B cell (primary cell): ENCODE measurements at regions of chr12 and their contacts with region 1.

Region 1: DNA sequence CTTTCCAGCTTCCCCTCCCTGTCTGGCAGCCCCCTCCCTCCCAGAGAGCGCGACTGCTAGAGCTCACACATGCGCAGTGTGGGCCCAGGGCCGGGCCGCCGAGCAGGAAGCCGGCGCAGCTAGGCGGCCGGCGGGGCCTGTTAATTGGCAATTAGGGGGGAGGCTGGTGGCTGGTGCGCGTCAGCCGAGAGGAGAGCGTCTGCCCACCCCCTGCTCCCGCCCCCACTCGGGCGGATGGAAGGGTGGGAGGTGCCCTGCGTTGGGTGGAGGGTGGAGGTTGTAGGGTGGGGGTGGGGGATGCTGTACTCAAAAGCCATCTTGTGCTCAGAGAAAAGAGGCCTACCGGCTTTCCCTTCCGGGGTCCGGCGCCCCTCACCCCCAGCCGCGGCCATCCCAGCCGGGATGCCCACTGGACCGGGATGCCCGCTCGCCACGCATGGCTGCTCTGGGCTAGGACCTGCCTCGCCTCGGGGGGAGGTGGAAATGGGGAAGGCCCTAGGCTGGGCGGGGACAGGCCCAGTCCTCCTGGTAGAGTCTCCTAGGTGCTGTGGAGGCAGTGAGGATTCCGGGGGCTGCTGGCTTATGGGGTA is 9.2 kb downstream of the HOXC8 start:
- DNase-seq: peak; percentile 84
- ATAC-seq: peak; percentile 87
- H3K4me3 ChIP-seq: peak overlapping the region in 4 of 5 experiments; percentile 43 to 71 (median 48)
- H3K4me3 Mint-ChIP-seq: peak overlapping the region; percentile 90
- H3K27ac ChIP-seq: peak overlapping the region; percentile 30 to 40
- H3K27ac Mint-ChIP-seq: peak overlapping the region; percentile 83
- H3K4me1 ChIP-seq: peaks cover 25 to 42% of the 10 kb centered on the region in 2 donors
- H3K4me1 Mint-ChIP-seq: peaks cover 22% of the 10 kb centered on the region
- H3K27me3 ChIP-seq: peaks cover 0 to 93% (median 73%) of the 10 kb centered on the region in 4 experiments
- H3K27me3 Mint-ChIP-seq: peaks cover 63% of the 10 kb centered on the region
- CTCF ChIP-seq: no peak

Region 2: DNA sequence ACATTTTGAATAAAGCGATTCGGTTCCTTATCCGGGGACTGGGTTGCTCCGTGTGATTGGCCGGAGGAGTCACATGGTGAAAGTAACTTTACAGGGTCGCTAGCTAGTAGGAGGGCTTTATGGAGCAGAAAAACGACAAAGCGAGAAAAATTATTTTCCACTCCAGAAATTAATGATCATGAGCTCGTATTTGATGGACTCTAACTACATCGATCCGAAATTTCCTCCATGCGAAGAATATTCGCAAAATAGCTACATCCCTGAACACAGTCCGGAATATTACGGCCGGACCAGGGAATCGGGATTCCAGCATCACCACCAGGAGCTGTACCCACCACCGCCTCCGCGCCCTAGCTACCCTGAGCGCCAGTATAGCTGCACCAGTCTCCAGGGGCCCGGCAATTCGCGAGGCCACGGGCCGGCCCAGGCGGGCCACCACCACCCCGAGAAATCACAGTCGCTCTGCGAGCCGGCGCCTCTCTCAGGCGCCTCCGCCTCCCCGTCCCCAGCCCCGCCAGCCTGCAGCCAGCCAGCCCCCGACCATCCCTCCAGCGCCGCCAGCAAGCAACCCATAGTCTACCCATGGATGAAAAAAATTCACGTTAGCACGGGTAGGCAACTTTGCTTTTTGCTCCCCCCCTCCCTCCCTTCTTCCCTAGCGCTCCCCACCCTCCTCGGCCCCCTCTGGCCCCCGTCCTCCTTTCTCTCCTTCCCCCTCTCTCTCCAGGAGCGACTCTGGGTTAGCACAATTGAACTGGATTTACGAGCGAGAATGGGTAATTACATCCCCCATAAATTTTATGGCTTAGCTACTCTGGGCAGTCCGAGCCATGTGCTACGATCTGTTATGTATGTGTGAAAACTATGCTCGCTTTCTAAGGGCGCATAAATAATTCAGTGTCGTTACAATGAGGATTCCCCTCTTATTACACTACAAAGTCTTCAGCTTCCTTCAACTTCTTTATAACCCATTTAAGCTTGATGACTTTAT is 36.1 kb after region 1 on chr12 and contains the start of gene HOXC4:
- CTCF ChIA-PET with region 1: no interaction called
- POLR2A ChIA-PET with region 1: interaction called, 3 read pairs
- intact Hi-C with region 1: loop called (anchors 1 kb)
- DNase-seq: peak; percentile 36
- ATAC-seq: peak; percentile 66
- H3K4me3 ChIP-seq: peak within 1 kb of the TSS in 4 of 5 experiments; percentile 69 to 78 (median 75)
- H3K4me3 Mint-ChIP-seq: peak within 1 kb of the TSS; percentile 91
- H3K27ac ChIP-seq: peak within 1 kb of the TSS; percentile 83 to 88
- H3K27ac Mint-ChIP-seq: peak within 1 kb of the TSS; percentile 95
- H3K4me1 ChIP-seq: peaks cover 36 to 42% of the 10 kb centered on the region in 2 donors
- H3K4me1 Mint-ChIP-seq: peaks cover 43% of the 10 kb centered on the region
- H3K27me3 ChIP-seq: peaks cover 0 to 63% (median 39%) of the 10 kb centered on the region in 4 experiments
- H3K27me3 Mint-ChIP-seq: peaks cover 56% of the 10 kb centered on the region
- CTCF ChIP-seq: no peak
- total RNA-seq, gene HOXC4: 6.4 and 6.5 TPM in 2 replicates

Region 3: GRCh38 chr12:54126696-54127537 is 108.9 kb after region 1 on chr12:
- CTCF ChIA-PET with region 1: no interaction called
- POLR2A ChIA-PET with region 1: interaction called, 10 read pairs
- intact Hi-C with region 1: no loop called
- DNase-seq: peak; percentile 45
- ATAC-seq: peak; percentile 51
- H3K4me3 ChIP-seq: peak overlapping the region in 4 of 5 experiments; percentile 13 to 57 (median 42)
- H3K4me3 Mint-ChIP-seq: peak overlapping the region; percentile 77
- H3K27ac ChIP-seq: no peak overlapping the region
- H3K27ac Mint-ChIP-seq: no peak overlapping the region
- H3K4me1 ChIP-seq: peaks cover 18 to 22% of the 10 kb centered on the region in 2 donors
- H3K4me1 Mint-ChIP-seq: peaks cover 16% of the 10 kb centered on the region
- H3K27me3 ChIP-seq: peaks cover 0 to 55% (median 26%) of the 10 kb centered on the region in 4 experiments
- H3K27me3 Mint-ChIP-seq: peaks cover 67% of the 10 kb centered on the region
- CTCF ChIP-seq: no peak